Cardiac septum (tissue), 1 donor: ENCODE measurements at regions of chr19 and their contacts with region 1.

Region 1: GRCh38 chr19:1355568-1356507 is 27.9 kb upstream of the NDUFS7 start:
- DNase-seq: no peak

Region 2: GRCh38 chr19:1275260-1275975 is 80.4 kb before region 1 on chr19 and contains the start of gene FAM174C:
- intact Hi-C with region 1: loop called (anchors 5 kb)
- DNase-seq: peak; percentile 96
- total RNA-seq, gene FAM174C: 20.0 TPM

Region 3: GRCh38 chr19:1324806-1325567 is 30.9 kb before region 1 on chr19:
- intact Hi-C with region 1: no loop called
- DNase-seq: no peak

Region 4: DNA sequence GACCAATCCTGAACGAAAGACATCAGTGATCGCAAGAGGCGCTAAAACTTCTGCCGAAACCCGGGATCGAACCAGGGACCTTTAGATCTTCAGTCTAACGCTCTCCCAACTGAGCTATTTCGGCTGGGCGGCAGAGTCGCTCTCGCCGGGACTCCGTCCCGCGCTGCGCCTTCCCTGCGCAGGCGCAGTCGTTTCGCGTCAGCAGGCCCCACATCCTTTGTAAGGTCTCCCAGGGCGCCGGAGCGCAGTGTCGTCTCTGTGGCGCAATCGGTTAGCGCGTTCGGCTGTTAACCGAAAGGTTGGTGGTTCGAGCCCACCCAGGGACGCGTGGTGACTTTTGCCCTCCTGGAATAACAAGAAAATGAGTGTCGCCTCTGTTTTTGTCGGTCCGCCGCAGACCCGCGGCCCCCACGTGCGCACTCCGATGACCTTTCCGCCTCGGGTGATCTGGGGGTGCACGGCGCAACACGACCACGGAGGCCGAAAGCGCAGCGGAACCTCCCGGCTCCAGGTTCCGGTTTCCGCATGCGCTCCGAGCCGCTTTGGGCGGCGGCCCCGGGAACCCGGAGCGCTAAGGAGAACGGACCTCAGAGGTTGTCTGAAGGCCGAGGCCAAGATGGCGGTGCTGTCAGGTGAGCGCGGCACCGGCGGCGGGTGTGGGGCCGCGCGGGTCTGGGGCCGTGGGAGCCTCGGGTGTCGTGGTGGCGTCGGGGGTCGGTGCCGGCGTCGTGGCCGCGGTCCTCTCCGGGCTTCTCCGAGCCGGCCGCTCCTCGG is 27.7 kb after region 1 on chr19 and contains the start of gene NDUFS7:
- intact Hi-C with region 1: loop called (anchors 2 kb)
- DNase-seq: peak; percentile 94
- total RNA-seq, gene NDUFS7: 233 TPM